Upper lobe of right lung (tissue), 1 donor: ENCODE measurements at regions of chr9 and their contacts with region 1.

Region 1: GRCh38 chr9:4750023-4750673 is 9.1 kb upstream of the AK3 start:
- DNase-seq: no peak
- ATAC-seq: peak; percentile 72
- H3K4me3 ChIP-seq: no peak overlapping the region
- H3K27ac ChIP-seq: no peak overlapping the region
- H3K4me1 ChIP-seq: no peaks in the 10 kb centered on the region
- H3K27me3 ChIP-seq: no peaks in the 10 kb centered on the region
- CTCF ChIP-seq: peak; percentile 64

Region 2: DNA sequence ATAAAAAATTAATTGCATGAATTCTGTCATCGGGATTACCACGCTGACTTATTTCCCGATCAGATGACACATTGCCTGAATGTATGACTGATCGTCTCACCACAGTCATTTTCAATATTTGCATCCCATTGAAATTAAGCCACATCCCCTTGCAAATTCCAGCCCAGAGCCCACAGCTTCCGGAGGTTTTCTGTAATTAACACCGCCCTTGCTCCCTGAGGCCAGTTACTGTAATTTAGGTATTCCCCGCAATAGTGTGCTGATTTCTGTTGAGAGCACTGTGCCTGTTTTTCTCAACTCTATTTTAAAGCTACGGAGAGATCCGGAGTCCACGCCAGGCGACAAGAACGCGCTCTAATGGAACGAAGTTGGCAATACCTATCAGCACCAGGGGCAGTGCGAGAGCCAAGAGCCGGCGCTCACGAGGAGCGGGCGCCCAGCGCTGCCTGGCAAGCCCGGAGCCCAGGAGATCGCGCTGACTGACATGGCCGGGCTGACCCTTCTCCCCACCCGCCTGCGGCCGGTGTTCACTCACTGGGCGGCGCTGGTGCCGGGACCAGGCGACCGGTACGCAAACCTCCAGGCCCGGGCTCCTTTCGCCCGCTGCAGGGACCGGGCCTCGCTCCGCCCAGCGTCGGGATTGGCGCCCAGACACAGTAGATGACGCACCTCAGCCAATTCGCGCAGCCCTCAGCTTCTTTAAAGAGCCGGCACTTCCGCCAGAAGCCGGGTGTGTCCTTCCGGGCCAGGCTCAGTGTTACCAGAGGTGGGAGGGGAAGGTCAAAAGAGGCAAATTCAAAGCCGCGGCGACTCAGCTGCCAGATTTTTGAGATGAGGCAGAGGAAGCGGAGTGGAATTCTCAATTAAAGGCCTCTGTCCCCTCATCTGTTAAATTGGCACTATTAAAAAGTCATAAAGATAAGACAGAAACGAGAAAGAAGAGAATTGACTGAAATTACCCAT is 687.4 kb after region 1 on chr9 and contains the start of gene PLGRKT:
- intact Hi-C with region 1: loop called (anchors 10 kb)
- DNase-seq: peak; percentile 97
- ATAC-seq: peak; percentile 99
- H3K4me3 ChIP-seq: peak within 1 kb of the TSS; percentile 82
- H3K27ac ChIP-seq: peak within 1 kb of the TSS; percentile 97
- H3K4me1 ChIP-seq: peaks cover 15% of the 10 kb centered on the region
- H3K27me3 ChIP-seq: no peaks in the 10 kb centered on the region
- CTCF ChIP-seq: peak; percentile 30
- total RNA-seq, gene PLGRKT: 18.0 TPM